Heart right ventricle (tissue), 16 donors: ENCODE measurements at regions of chr2 and their contacts with region 1.

Region 1: DNA sequence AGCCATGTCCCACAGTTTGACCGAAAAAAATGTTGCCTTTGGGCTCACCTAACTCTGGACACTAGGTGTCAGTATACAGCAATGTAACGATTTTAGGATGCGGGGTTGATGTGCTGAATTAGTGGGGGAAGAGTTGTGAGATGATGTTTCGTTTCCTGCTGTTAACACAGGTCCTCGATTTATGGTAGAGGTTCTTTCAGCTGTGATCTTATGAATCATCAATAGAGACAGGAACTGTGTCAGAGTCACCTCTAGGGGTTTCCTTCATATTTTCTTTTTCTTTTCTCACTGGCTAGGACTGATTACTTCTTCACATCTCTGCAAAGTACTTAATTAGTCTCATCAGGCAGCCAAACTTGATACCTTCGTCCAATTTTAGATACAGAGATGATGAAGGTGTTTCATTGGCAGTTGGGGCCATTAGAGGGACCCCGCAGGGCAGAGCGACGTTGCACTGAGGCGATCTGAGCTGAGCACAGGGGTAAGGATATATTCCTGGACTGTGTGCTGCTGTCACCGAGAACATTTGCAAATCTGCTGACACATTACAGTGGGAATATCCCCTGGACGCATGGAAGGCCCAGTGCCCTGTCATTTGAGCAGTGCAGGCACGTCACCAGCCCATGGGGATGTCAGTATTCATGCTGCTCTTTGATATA is 10.2 kb upstream of the MMADHC start:
- DNase-seq: peak in 1 of 2 donors; percentile 42
- ATAC-seq: peak; percentile 76 to 95 (median 92)
- H3K4me3 ChIP-seq: peak overlapping the region in 7 of 10 donors; percentile 8 to 38 (median 26)
- H3K27ac ChIP-seq: no peak overlapping the region
- H3K4me1 ChIP-seq: peaks cover 0 to 11% (median 0%) of the 10 kb centered on the region in 9 donors
- H3K27me3 ChIP-seq: no peaks in the 10 kb centered on the region
- CTCF ChIP-seq: peak; percentile 61 to 90 (median 81)

Region 2: DNA sequence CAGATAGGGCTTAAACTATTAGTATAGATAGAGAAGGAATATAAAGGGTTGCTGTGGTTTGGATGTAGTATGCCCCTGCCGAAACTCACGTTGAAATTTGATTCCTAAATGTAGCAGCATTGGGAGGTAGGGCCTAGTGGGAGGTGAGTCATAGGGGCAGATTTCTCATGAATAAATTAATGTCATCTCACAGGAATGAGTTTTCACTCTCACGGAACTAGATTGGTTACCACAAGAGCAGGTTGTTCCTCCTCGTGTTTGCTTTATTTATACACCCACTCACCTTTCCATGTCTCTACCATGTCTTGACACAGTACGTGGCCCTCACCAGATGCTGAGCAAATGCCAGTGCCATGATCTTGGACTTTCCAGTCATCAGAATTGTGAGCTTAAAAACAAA is 1445.7 kb after region 1 on chr2:
- intact Hi-C with region 1: loop called in 2 of 10 experiments (anchors 5 to 10 kb)
- DNase-seq: no peak
- ATAC-seq: no peak
- H3K4me3 ChIP-seq: no peak overlapping the region
- H3K27ac ChIP-seq: no peak overlapping the region
- H3K4me1 ChIP-seq: no peaks in the 10 kb centered on the region
- H3K27me3 ChIP-seq: no peaks in the 10 kb centered on the region
- CTCF ChIP-seq: no peak

Region 3: DNA sequence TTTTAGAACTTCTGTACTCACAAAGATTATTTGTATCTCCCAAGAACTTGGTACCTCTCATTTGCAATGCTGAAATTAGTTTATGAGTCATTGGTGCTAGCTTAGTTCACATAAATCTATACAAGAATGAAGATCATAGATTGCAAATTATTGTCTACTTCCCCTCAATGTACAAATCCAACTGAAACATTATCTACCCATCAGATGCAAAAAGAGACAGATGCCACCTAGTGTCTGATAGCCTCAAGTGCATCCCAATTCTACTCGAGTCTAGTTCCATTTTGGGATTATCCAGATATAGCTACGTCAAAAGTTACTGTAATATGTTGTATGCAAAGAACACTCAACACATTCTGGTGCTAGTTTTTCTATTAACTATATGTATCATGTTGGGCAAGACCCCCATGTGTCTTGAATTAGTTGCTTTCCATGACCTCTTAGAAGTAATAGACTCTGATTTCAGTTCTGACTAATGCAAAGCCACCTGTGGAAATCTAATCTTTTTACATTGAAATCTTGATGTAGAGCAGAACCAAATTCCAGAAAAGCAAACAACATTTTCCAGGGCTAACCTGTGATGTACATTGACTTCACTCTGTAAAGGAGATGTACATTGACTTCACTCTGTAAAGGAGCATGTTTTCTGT is 1453.9 kb after region 1 on chr2:
- intact Hi-C with region 1: loop called in 7 of 10 experiments (anchors 5 to 10 kb)
- DNase-seq: peak in 1 of 2 donors; percentile 6
- ATAC-seq: peak in 3 of 8 donors; percentile 51 to 55 (median 53)
- H3K4me3 ChIP-seq: no peak overlapping the region
- H3K27ac ChIP-seq: no peak overlapping the region
- H3K4me1 ChIP-seq: peaks cover 0 to 4% (median 0%) of the 10 kb centered on the region in 9 donors
- H3K27me3 ChIP-seq: no peaks in the 10 kb centered on the region
- CTCF ChIP-seq: peak; percentile 54 to 86 (median 81)

Region 4: DNA sequence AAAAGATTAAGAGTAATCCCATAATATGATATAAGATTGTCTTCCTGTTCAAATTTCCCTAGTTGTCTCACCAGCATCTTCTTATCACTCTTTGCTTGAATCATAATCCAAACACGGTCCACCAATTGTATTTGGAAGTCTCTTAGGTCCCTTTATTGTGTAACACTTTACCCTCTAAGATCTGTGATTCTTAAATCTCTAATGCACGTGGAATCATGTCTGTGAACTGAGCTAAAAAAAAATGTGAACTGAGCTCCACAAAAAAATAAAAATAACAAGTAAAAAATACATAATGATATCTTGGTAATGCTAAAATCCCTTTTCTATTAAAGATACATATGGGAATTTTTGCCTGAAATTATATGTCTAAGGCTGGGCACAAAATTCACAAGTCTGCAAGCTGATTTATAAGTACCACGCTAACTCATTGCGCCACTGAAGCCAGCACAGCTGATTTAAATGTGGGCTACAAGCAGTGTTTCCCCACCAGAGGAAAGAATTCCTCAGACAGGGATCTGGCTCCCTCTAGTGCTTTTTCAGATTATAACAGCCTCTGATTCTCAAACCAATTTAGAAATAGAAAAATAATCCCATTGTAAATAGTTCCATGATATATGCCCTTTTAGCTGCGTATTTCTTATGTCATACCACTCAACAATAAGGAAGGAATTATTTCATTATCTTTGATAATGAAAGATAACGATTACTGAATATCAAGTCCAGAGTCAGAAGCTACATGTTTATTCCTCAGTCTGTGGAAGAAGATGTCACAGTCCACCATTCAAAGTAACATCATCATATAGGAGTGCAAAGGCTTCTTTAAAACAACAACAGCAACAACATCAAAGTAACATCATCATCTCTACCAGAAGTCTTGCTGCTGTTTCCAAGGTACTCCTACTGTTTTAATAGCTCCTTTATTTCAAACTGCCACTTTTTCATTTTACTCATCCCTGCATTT is 1641.0 kb after region 1 on chr2:
- intact Hi-C with region 1: loop called (anchors 2 to 10 kb)
- DNase-seq: peak in 1 of 2 donors; percentile 54
- ATAC-seq: peak in 7 of 8 donors; percentile 61 to 89 (median 79)
- H3K4me3 ChIP-seq: no peak overlapping the region
- H3K27ac ChIP-seq: no peak overlapping the region
- H3K4me1 ChIP-seq: peaks cover 0 to 3% (median 0%) of the 10 kb centered on the region in 9 donors
- H3K27me3 ChIP-seq: no peaks in the 10 kb centered on the region
- CTCF ChIP-seq: peak; percentile 76 to 93 (median 86)